CD4-positive, alpha-beta memory T cell (primary cell): ENCODE measurements at regions of chr17 and their contacts with region 1.

Region 1: DNA sequence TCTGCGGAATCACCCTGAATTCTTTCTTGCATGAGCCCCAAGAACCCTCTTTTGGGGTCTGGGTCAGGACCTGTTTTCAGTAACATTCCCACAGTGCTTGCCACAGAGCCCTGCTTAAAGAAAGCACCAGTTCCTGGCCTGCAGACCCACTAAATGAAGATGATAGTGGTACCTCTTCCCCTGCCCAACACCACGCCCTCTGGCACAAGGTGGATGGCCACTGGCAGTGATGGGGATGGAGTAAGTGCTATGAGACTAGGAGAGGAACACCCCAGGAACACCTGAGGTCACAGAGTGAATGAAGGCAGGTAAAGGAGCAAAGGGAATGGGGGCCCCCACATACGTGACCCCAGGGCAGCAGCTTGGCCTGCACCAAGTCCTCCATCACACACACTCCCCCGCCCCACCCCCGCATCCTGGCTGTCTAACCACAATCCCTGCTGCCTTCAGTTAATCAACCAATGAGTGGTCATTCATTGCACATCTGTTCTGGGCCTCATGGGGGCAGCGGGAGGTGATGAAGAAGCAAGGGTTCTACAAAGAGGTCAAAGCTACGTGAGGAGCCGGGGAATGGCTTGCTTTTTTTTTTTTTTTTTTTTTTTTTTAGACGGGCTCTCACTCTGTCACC is 3.9 kb upstream of the PPY start:
- DNase-seq: no peak
- H3K4me3 ChIP-seq: no peak overlapping the region
- H3K4me3 Mint-ChIP-seq: no peak overlapping the region
- H3K27ac ChIP-seq: no peak overlapping the region
- H3K27ac Mint-ChIP-seq: no peak overlapping the region
- H3K4me1 ChIP-seq: no peaks in the 10 kb centered on the region
- H3K4me1 Mint-ChIP-seq: peaks cover 0 to 1% (median 0%) of the 10 kb centered on the region in 4 donors
- H3K27me3 ChIP-seq: no peaks in the 10 kb centered on the region
- H3K27me3 Mint-ChIP-seq: peaks cover 8 to 19% of the 10 kb centered on the region in 2 donors

Region 2: GRCh38 chr17:43628089-43628650 is 318.0 kb before region 1 on chr17:
- CTCF ChIA-PET with region 1: no interaction called
- POLR2A ChIA-PET with region 1: no interaction called
- intact Hi-C with region 1: no loop called
- DNase-seq: no peak
- H3K4me3 ChIP-seq: no peak overlapping the region
- H3K4me3 Mint-ChIP-seq: no peak overlapping the region
- H3K27ac ChIP-seq: no peak overlapping the region
- H3K27ac Mint-ChIP-seq: peak overlapping the region in 1 of 7 donors; percentile 19
- H3K4me1 ChIP-seq: no peaks in the 10 kb centered on the region
- H3K4me1 Mint-ChIP-seq: no peaks in the 10 kb centered on the region
- H3K27me3 ChIP-seq: no peaks in the 10 kb centered on the region
- H3K27me3 Mint-ChIP-seq: peaks cover 5 to 10% of the 10 kb centered on the region in 2 donors

Region 3: DNA sequence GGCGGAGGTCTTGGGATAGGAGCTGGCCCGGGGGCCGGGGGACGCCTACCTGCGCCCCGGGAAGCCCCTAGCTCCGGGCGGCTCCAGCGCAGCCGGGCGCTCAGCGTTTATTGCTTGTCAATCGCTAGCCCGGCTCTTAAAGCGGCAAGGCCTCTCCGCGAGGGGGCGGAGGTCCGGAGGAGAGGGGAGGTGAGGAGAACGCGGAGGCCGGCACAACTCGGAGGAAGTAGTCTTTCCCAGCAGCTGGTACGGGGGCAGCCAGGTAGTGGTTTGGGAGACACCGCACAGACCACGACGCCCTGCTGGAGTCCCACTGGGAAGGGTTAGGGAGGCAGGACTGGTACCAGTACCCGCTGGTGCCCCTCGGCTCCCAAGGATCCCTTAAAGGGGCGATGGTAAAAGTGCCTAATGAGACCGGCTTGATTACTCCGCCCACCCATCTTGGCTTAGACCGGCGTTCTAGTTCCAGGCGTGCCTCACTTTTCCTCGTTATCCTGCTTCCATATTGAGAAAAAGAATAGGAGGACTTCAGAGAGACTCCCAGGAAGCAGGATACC is 38.7 kb before region 1 on chr17 and contains the start of gene MPP2:
- CTCF ChIA-PET with region 1: interaction called, 29 read pairs
- POLR2A ChIA-PET with region 1: no interaction called
- intact Hi-C with region 1: no loop called
- DNase-seq: peak; percentile 60 to 76 (median 67)
- H3K4me3 ChIP-seq: peak within 1 kb of the TSS; percentile 42 to 65
- H3K4me3 Mint-ChIP-seq: peak within 1 kb of the TSS; percentile 82 to 96 (median 85)
- H3K27ac ChIP-seq: peak within 1 kb of the TSS; percentile 58
- H3K27ac Mint-ChIP-seq: peak within 1 kb of the TSS; percentile 46 to 91 (median 86)
- H3K4me1 ChIP-seq: peaks cover 25% of the 10 kb centered on the region
- H3K4me1 Mint-ChIP-seq: peaks cover 7 to 35% (median 14%) of the 10 kb centered on the region in 4 donors
- H3K27me3 ChIP-seq: peaks cover 12% of the 10 kb centered on the region
- H3K27me3 Mint-ChIP-seq: peaks cover 6 to 16% of the 10 kb centered on the region in 2 donors
- total RNA-seq, gene MPP2: 2.1 to 3.0 TPM

Region 4: GRCh38 chr17:43928609-43929008 is 17.6 kb before region 1 on chr17:
- CTCF ChIA-PET with region 1: interaction called, 10 read pairs
- POLR2A ChIA-PET with region 1: no interaction called
- intact Hi-C with region 1: no loop called
- DNase-seq: no peak
- H3K4me3 ChIP-seq: no peak overlapping the region
- H3K4me3 Mint-ChIP-seq: no peak overlapping the region
- H3K27ac ChIP-seq: no peak overlapping the region
- H3K27ac Mint-ChIP-seq: no peak overlapping the region
- H3K4me1 ChIP-seq: peaks cover 21% of the 10 kb centered on the region
- H3K4me1 Mint-ChIP-seq: peaks cover 12 to 29% (median 18%) of the 10 kb centered on the region in 4 donors
- H3K27me3 ChIP-seq: no peaks in the 10 kb centered on the region
- H3K27me3 Mint-ChIP-seq: peaks cover 0 to 3% of the 10 kb centered on the region in 2 donors

Region 5: DNA sequence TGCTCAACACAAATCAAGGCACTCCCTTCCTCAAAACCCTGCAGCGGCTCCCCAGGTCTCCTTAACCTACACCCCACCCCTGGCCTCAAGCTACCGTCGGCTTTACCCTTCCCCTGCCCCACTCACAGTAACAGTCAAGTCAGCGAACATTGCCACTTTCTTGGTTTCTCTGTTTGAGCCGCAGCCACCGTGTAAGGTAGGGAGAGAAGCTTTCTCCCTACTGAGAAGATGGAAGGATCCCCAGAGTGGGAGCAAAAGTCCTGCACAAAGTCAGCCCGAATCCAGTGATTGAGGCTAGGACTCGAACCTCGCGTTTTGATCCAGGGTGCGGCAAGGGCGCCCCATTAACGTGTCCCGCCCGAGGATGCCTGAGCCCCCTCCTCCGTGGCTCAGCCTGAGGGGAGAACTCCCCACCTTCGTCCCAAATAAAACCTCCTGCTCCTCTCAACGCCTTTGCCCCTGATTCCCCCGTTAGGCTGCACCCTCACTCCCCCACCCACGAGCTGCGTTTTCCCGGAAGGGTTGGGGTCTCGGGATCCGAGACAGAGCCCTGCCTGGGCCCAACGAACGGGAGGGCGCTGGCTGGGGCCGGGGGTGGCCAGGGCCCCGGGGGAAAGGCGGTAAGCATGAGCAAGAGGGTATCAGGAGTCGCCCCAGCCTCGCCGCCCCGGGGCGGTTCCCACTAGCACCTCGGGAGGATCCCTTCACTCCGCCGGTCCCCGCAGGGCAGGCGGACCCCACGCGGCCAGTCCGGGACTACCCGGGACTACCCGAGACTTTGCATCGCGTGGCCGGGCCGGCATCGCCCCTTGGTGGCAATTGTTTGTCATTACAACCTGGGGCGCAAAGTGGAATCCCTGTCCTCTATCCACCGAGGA is 48.3 kb after region 1 on chr17:
- CTCF ChIA-PET with region 1: interaction called, 20 read pairs
- POLR2A ChIA-PET with region 1: no interaction called
- intact Hi-C with region 1: loop called (anchors 1 kb)
- DNase-seq: peak; percentile 61 to 69 (median 65)
- H3K4me3 ChIP-seq: no peak overlapping the region
- H3K4me3 Mint-ChIP-seq: peak overlapping the region in 2 of 8 donors; percentile 4 to 51
- H3K27ac ChIP-seq: no peak overlapping the region
- H3K27ac Mint-ChIP-seq: peak overlapping the region in 1 of 7 donors; percentile 13
- H3K4me1 ChIP-seq: peaks cover 10% of the 10 kb centered on the region
- H3K4me1 Mint-ChIP-seq: peaks cover 0 to 3% (median under 1%) of the 10 kb centered on the region in 4 donors
- H3K27me3 ChIP-seq: peaks cover 3% of the 10 kb centered on the region
- H3K27me3 Mint-ChIP-seq: peaks cover 8 to 9% of the 10 kb centered on the region in 2 donors

Region 6: GRCh38 chr17:44044067-44044466 is 97.9 kb after region 1 on chr17:
- CTCF ChIA-PET with region 1: interaction called, 120 read pairs
- POLR2A ChIA-PET with region 1: interaction called, 5 read pairs
- intact Hi-C with region 1: loop called (anchors 1 kb)
- DNase-seq: no peak
- H3K4me3 ChIP-seq: no peak overlapping the region
- H3K4me3 Mint-ChIP-seq: no peak overlapping the region
- H3K27ac ChIP-seq: no peak overlapping the region
- H3K27ac Mint-ChIP-seq: peak overlapping the region in 3 of 7 donors; percentile 18 to 35 (median 34)
- H3K4me1 ChIP-seq: peaks cover 8% of the 10 kb centered on the region
- H3K4me1 Mint-ChIP-seq: peaks cover 11 to 16% (median 13%) of the 10 kb centered on the region in 4 donors
- H3K27me3 ChIP-seq: no peaks in the 10 kb centered on the region
- H3K27me3 Mint-ChIP-seq: no peaks in the 10 kb centered on the region